ENCODE measurements at regions of chr10 and their contacts with region 1.

Region 1: GRCh38 chr10:116444527-116445142 is 17.0 kb downstream of the PNLIPRP3 start:
- DNase-seq: peak; percentile 38
- H3K4me3 ChIP-seq: no peak overlapping the region
- H3K27ac ChIP-seq: no peak overlapping the region
- H3K4me1 ChIP-seq: no peaks in the 10 kb centered on the region
- H3K27me3 ChIP-seq: peaks cover 37% of the 10 kb centered on the region
- CTCF ChIP-seq: peak; percentile 90

Region 2: DNA sequence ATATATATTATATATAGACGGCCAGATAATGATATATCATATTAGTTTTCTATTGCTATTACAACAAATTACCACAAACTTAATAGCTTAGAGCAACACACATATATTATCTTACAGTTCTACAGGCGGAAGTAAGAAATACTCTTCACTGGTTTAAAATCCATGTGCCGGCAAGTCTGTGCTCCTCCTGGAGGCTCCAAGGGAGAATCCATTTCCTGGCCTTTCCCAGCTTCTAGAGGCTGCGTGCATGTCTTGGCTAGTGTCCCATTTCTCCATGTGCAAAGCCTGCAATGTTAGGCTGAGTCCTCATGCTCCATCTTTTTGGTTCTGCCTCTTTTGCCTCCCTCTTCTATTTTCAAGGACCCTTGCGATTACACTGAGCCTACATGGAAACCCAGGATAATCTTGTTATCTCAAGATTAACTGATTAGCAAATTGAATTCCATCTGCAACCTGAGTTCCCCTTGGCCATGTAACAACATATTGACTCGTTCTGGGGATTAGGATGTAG is 40.8 kb before region 1 on chr10:
- CTCF ChIA-PET with region 1: no interaction called
- POLR2A ChIA-PET with region 1: no interaction called
- intact Hi-C with region 1: no loop called
- DNase-seq: peak; percentile 14
- H3K4me3 ChIP-seq: no peak overlapping the region
- H3K27ac ChIP-seq: no peak overlapping the region
- H3K4me1 ChIP-seq: no peaks in the 10 kb centered on the region
- H3K27me3 ChIP-seq: peaks cover 60% of the 10 kb centered on the region
- CTCF ChIP-seq: no peak

Region 3: GRCh38 chr10:116490028-116490662 is 45.5 kb after region 1 on chr10:
- CTCF ChIA-PET with region 1: no interaction called
- POLR2A ChIA-PET with region 1: no interaction called
- intact Hi-C with region 1: loop called (anchors 2 kb)
- DNase-seq: peak; percentile 48
- H3K4me3 ChIP-seq: no peak overlapping the region
- H3K27ac ChIP-seq: no peak overlapping the region
- H3K4me1 ChIP-seq: no peaks in the 10 kb centered on the region
- H3K27me3 ChIP-seq: peaks cover 16% of the 10 kb centered on the region
- CTCF ChIP-seq: peak; percentile 82

Region 4: DNA sequence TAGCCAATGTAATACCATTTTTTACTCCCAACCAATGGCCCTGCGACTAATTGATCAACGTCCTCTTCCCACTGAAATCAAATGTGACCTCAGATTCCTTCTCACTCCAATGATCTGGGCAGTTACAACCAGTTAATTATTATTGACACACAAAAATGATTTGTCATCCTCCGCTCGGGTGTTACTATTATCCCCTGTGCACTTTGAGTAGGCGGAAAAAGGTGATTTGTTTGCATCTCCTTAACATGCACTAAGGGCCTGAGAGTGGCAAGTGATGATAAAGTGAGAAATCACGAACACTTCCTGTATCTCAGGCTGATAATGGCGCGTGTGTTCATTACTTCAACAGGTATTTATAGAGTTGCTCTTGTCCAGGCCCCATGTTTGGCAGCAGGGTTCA is 60.2 kb after region 1 on chr10:
- CTCF ChIA-PET with region 1: interaction called, 10 read pairs
- POLR2A ChIA-PET with region 1: no interaction called
- intact Hi-C with region 1: no loop called
- DNase-seq: no peak
- H3K4me3 ChIP-seq: no peak overlapping the region
- H3K27ac ChIP-seq: no peak overlapping the region
- H3K4me1 ChIP-seq: no peaks in the 10 kb centered on the region
- H3K27me3 ChIP-seq: peaks cover 27% of the 10 kb centered on the region
- CTCF ChIP-seq: no peak